ENCODE measurements at regions of chr20 and their contacts with region 1.

Region 1: GRCh38 chr20:41339507-41340326 is 904 bp upstream of the LPIN3 start:
- DNase-seq: no peak
- H3K4me3 ChIP-seq: peak overlapping the region; percentile 54
- H3K27me3 ChIP-seq: no peaks in the 10 kb centered on the region
- CTCF ChIP-seq: peak; percentile 94

Region 2: GRCh38 chr20:40990542-40991120 is 349.1 kb before region 1 on chr20:
- CTCF ChIA-PET with region 1: interaction called, 22 read pairs
- POLR2A ChIA-PET with region 1: interaction called, 4 read pairs
- DNase-seq: no peak
- H3K4me3 ChIP-seq: no peak overlapping the region
- H3K27me3 ChIP-seq: no peaks in the 10 kb centered on the region
- CTCF ChIP-seq: peak; percentile 92

Region 3: DNA sequence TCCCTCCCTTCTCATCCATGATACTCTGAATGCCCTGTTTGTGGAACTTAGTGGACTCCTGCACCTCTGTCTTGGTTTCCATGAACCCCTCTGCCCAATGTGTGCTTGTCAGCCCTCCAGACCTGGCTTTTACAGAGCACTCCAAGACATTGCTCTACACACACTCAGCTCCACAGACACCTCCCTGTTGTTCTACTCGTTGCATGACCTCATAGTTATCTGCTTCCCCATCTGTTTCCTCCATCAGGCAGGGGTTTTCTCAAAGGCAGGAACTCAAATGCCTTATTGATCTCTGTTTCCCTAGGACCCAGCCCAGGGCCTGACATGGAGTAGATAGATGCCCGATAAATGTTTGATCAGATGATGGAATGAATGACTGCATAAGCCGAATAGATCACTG is 189.1 kb before region 1 on chr20:
- CTCF ChIA-PET with region 1: interaction called, 12 read pairs
- POLR2A ChIA-PET with region 1: no interaction called
- DNase-seq: no peak
- H3K4me3 ChIP-seq: no peak overlapping the region
- H3K27me3 ChIP-seq: no peaks in the 10 kb centered on the region
- CTCF ChIP-seq: no peak

Region 4: DNA sequence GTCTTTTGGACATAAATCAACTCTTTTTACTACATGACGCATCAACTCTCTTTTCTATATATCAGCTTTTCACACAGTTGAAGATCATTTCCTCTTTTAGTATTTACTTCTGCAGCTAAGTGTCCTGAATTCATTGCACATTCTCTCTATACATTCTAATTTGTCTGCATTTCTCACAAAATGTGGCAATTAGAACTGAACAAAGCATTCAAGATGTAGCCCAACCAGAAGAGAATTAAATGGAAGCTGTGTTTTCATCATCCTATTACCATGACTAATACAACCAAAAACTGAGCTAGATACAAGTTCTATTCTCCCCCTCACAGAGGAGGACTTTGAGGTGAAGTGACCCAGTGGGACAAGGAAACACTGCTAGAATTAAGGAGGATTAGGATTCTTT is 115.4 kb before region 1 on chr20:
- CTCF ChIA-PET with region 1: interaction called, 12 read pairs
- POLR2A ChIA-PET with region 1: no interaction called
- DNase-seq: no peak
- H3K4me3 ChIP-seq: no peak overlapping the region
- H3K27me3 ChIP-seq: no peaks in the 10 kb centered on the region
- CTCF ChIP-seq: no peak

Region 5: GRCh38 chr20:41329435-41330342 is 10.0 kb before region 1 on chr20:
- CTCF ChIA-PET with region 1: interaction called, 19 read pairs
- POLR2A ChIA-PET with region 1: interaction called, 3 read pairs
- DNase-seq: peak; percentile 98
- H3K4me3 ChIP-seq: peak overlapping the region; percentile 5; the same call in 1 of the 2 replicates
- H3K27me3 ChIP-seq: no peaks in the 10 kb centered on the region
- CTCF ChIP-seq: no peak